IMR-90 (cell line): ENCODE measurements at regions of chr9 and their contacts with region 1.

Region 1: DNA sequence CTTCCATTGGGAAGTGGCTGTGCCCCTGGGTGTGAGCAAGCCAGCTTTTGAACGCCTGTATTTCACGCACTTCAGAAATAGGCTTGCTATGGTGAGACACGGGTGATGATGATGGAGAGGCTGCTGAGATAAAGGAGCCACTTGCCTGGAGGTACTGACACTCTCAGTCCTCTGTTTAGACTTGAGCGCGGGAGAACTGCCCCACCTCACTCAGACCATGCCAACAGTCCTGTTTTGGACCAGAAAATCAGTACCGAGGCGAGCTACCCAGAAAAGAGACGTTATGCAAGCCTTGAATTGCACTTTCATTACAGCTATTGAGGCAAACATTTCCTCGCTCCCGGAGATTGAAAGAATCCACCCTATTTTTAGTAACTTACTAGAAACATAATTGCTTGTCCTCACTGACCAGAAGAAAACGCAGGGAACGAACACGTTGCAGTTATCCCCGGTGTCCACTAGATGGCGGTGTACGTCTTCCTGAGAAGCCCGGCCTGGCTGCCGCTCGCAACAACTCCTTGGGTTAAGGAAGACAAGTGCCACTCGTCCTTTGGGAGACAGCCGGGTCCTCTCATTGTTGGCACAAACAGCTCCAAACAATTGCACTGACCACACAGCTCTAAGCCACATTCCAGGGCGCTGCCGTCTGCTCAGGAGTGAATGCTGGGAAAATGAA is 142.4 kb downstream of the PSAT1 start:
- DNase-seq: peak; percentile 89
- ATAC-seq: peak; percentile 97
- H3K4me3 ChIP-seq: peak overlapping the region; percentile 5; the same call in 1 of the 2 replicates
- H3K27ac ChIP-seq: no peak overlapping the region
- H3K4me1 ChIP-seq: no peaks in the 10 kb centered on the region
- H3K27me3 ChIP-seq: peaks cover 14% of the 10 kb centered on the region
- CTCF ChIP-seq: peak; percentile 95
- POLR2A ChIP-seq: peak; percentile 30; the same call in 1 of the 2 replicates
- RAD21 ChIP-seq: peak; percentile 97

Region 2: DNA sequence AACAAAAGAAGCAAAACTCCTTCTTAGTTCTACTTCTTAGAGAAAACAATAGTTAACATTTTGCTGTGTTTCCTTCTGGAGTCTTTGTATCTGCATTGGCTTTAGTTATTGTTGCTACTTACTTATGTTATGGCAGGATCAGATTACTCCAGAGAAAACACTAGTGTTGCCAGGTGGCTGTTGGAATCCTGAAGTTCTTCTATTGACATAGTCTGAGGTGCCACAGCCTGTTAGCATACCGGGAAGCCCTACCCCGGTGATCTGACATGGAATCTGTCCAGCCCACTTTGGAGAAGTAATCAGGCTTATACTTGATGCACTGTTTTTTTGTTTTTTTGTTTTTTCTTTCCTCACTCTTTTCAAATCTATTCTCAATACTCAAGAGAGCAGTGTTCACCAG is 272.0 kb before region 1 on chr9:
- CTCF ChIA-PET with region 1: no interaction called
- POLR2A ChIA-PET with region 1: no interaction called
- dilution Hi-C with region 1: no loop called
- in situ Hi-C with region 1: no loop called
- intact Hi-C with region 1: no loop called
- DNase-seq: no peak
- ATAC-seq: no peak
- H3K4me3 ChIP-seq: no peak overlapping the region
- H3K27ac ChIP-seq: no peak overlapping the region
- H3K4me1 ChIP-seq: no peaks in the 10 kb centered on the region
- H3K27me3 ChIP-seq: no peaks in the 10 kb centered on the region; the same call in 1 of the 2 replicates
- CTCF ChIP-seq: no peak
- POLR2A ChIP-seq: no peak
- RAD21 ChIP-seq: no peak

Region 3: DNA sequence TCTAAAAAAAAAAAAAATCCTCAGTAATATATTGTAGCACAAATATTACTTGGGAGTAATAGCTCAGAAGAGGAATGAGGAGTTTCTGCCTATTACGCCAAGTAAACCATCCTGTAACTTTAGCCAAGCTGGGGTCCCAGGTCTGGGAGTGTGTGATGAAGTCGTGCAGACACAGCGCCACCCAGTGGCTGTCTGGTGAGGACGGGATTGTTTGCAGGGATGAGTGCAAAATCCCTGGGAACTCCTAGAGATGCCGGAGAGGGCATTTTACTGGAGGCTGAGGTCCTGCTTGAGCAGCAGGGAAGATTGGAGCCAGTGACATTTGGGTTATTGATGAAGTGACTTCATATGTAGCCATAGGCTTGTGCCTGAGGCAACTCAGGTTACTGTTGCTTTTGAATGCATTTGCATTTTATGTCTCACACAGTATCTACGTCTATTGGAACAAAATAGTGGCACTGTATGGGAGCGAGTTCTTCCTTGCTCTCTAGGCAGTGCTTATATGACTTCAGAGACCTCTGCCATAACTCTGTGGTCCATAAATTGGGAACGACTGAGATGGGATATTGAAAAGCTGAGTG is 69.6 kb before region 1 on chr9:
- CTCF ChIA-PET with region 1: no interaction called
- POLR2A ChIA-PET with region 1: no interaction called
- dilution Hi-C with region 1: no loop called
- in situ Hi-C with region 1: no loop called
- intact Hi-C with region 1: loop called (anchors 1 kb)
- DNase-seq: peak; percentile 69
- ATAC-seq: peak; percentile 91
- H3K4me3 ChIP-seq: no peak overlapping the region
- H3K27ac ChIP-seq: no peak overlapping the region
- H3K4me1 ChIP-seq: no peaks in the 10 kb centered on the region
- H3K27me3 ChIP-seq: peaks cover 10% of the 10 kb centered on the region
- CTCF ChIP-seq: peak; percentile 72
- POLR2A ChIP-seq: no peak
- RAD21 ChIP-seq: peak; percentile 47

Region 4: GRCh38 chr9:78921341-78921740 is 482.0 kb after region 1 on chr9:
- CTCF ChIA-PET with region 1: no interaction called
- POLR2A ChIA-PET with region 1: no interaction called
- dilution Hi-C with region 1: no loop called
- in situ Hi-C with region 1: no loop called
- intact Hi-C with region 1: no loop called
- DNase-seq: peak; percentile 43
- ATAC-seq: no peak
- H3K4me3 ChIP-seq: no peak overlapping the region
- H3K27ac ChIP-seq: no peak overlapping the region
- H3K4me1 ChIP-seq: no peaks in the 10 kb centered on the region
- H3K27me3 ChIP-seq: no peaks in the 10 kb centered on the region
- CTCF ChIP-seq: no peak
- POLR2A ChIP-seq: no peak
- RAD21 ChIP-seq: no peak

Region 5: GRCh38 chr9:79565245-79565644 is 1125.9 kb after region 1 on chr9:
- CTCF ChIA-PET with region 1: no interaction called
- POLR2A ChIA-PET with region 1: no interaction called
- dilution Hi-C with region 1: no loop called
- in situ Hi-C with region 1: loop called (anchors 10 kb)
- intact Hi-C with region 1: loop called (anchors 2 kb)
- DNase-seq: peak; percentile 72
- ATAC-seq: peak; percentile 51; the same call in 1 of the 2 replicates
- H3K4me3 ChIP-seq: no peak overlapping the region
- H3K27ac ChIP-seq: no peak overlapping the region
- H3K4me1 ChIP-seq: peaks cover 2% of the 10 kb centered on the region; the same call in 1 of the 2 replicates
- H3K27me3 ChIP-seq: no peaks in the 10 kb centered on the region
- CTCF ChIP-seq: no peak
- POLR2A ChIP-seq: no peak
- RAD21 ChIP-seq: no peak